ENCODE measurements at regions of chr6 and their contacts with region 1.

Region 1: GRCh38 chr6:133368664-133369063 is 127.5 kb downstream of the EYA4 start:
- DNase-seq: no peak

Region 2: GRCh38 chr6:132962936-132963868 is 405.5 kb before region 1 on chr6:
- intact Hi-C with region 1: loop called (anchors 10 kb)
- DNase-seq: no peak

Region 3: DNA sequence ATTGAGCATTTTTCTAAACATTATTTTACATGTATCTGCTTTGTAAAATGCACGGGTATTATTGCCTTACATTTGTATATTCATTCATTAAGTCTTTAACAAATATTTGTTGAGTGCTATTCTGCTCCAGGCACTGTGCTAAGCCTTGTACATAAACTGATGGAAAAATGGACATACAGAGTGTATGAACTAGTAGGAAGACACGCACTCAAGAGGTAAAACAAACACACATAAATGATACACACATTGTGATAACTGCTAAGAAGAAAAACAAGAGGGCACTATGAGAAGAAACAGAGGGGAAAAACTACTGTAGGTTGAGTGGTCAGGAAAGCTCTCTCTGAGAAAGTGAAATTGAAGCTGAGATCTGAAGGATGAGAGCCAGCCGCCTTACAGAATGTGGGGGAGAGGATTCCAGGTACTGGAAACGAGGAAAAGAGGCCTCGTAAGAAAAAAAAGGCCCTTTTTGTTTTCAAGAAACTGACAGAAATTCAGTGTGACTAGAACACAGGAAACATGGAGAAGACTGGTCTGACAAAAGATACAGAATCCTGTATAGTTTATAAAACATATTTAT is 10.0 kb before region 1 on chr6:
- intact Hi-C with region 1: no loop called
- DNase-seq: no peak

Measured in cardiac septum (tissue), 1 donor.